Astrocyte of the cerebellum (primary cell): ENCODE measurements at regions of chr9 and their contacts with region 1.

Region 1: GRCh38 chr9:98873951-98874371 is 66.5 kb downstream of the GALNT12 start:
- DNase-seq: no peak
- H3K4me3 ChIP-seq: no peak overlapping the region
- CTCF ChIP-seq: no peak

Region 2: GRCh38 chr9:98516897-98517503 is 357.0 kb before region 1 on chr9:
- in situ Hi-C with region 1: no loop called
- DNase-seq: no peak
- H3K4me3 ChIP-seq: no peak overlapping the region
- CTCF ChIP-seq: no peak

Region 3: GRCh38 chr9:98833090-98833956 is 40.6 kb before region 1 on chr9:
- in situ Hi-C with region 1: no loop called
- DNase-seq: no peak
- H3K4me3 ChIP-seq: no peak overlapping the region
- CTCF ChIP-seq: no peak

Region 4: GRCh38 chr9:98962181-98962560 is 88.2 kb after region 1 on chr9:
- in situ Hi-C with region 1: loop called (anchors 5 kb)
- DNase-seq: peak; percentile 49
- H3K4me3 ChIP-seq: no peak overlapping the region
- CTCF ChIP-seq: no peak

Region 5: DNA sequence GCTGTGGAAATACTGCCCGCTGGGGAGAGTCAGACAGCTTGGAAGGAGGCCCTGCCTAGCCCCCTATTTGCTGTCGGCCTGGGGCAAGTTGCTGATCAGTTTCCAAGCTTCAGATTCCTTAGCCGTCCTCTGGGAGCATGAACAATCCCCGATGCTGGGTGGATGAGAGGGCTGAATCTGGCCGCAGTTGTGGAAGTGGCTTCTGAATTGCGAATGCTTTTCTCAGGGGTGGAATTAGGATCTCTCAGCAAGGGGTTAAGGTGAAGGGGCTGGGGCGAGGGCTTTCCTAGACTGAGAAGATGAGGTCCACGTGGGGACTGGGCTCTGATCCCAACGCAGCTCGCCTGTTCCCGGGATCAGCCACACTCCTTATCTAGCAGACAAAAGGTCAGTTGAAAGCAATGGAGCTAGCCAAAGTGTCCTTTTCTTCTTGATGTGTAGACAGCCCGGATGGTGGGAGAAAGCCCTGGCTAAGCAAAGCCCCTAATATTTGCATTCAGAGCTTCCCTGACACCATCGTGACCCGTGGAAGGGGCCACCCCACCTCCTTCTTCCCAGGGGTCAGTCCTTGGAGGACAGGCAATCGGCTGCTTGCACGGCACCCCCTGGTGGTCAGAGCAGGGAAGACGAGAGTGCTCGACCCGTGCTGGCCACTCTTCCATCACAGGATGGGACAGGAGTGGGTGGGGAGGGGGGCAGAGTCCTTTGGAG is 124.6 kb after region 1 on chr9:
- in situ Hi-C with region 1: loop called (anchors 10 kb)
- DNase-seq: no peak
- H3K4me3 ChIP-seq: no peak overlapping the region
- CTCF ChIP-seq: peak; percentile 85